SK-N-SH (cell line): ENCODE measurements at regions of chr20 and their contacts with region 1.

Region 1: DNA sequence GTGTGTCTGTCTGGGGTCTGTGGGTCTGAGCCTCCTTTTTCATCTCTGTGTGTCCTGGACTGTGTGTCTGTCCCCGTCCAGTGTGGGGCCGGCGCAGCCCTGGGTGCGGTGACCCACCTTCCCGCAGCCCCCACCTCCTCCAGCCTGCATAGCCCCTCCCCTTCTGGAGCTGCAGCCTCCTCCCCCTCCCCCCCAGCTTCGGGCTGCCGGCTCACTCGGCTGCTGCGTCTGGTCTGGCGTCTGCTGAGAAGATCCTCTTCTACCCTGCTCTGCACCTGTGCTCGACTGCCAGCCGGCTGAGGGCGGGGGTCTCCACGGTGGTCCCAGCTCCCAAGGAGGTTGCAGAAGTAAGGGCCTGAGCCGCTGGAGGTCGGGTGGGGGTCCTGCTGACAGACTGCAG is 7.6 kb upstream of the LKAAEAR1 start:
- DNase-seq: peak; percentile 79
- H3K4me3 ChIP-seq: no peak overlapping the region
- H3K27ac ChIP-seq: 0 out of 4 replicates have a peak overlapping the region, but pooled peaks of 1 of the 2 experiments have one; percentile 8
- H3K4me1 ChIP-seq: peaks cover 0 to 28% of the 10 kb centered on the region in 2 experiments; a peak in 1 of 4 replicates
- H3K27me3 ChIP-seq: no peaks in the 10 kb centered on the region
- CTCF ChIP-seq: no peak
- EP300 ChIP-seq: no peak
- RAD21 ChIP-seq: no peak

Region 2: DNA sequence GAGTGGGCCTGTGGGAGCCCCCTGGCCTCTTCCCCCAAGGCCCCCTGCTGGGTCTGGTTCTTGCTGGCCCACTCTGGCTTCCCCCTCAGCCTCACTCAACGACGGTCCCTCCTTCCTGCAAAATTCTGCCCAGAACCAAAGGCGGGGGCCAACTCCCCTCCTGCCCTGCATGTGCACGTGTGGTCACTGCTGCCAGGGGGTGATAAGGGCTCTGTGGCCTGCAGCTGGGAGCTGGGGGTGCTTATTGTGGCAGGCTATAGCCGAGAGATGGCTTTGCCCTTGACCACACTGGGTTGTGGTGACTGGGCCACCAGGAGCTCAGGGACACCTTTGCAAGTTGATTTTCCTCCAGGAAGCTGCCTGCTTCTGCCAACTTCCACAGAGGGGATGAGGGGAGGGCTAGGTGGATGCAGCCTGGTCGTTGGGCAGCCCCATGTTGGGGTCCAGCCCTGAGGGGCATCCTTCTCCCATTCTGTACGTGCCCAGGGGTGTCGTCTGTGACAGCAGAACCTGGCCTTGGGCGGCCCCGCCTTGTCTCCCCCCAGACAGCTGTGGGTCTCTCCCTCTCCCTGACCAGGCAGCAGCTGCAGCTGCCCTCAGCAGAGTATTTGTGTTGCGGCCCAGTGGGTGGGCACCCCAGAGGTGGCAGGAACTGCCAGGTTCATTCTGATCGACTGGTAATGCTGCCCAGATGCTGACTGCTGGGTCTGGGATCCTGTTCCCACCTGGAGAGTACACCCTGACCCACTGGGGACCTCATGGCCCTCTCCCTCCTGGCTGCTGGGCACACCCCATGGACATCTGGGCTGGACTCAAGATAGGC is 23.2 kb before region 1 on chr20:
- CTCF ChIA-PET with region 1: no interaction called
- POLR2A ChIA-PET with region 1: no interaction called
- DNase-seq: no peak
- H3K4me3 ChIP-seq: no peak overlapping the region
- H3K27ac ChIP-seq: no peak overlapping the region
- H3K4me1 ChIP-seq: peaks cover 9 to 14% of the 10 kb centered on the region in 2 experiments; a peak in 2 of 4 replicates
- H3K27me3 ChIP-seq: no peaks in the 10 kb centered on the region
- CTCF ChIP-seq: no peak
- EP300 ChIP-seq: no peak
- RAD21 ChIP-seq: no peak

Region 3: GRCh38 chr20:64101731-64102621 is 10.2 kb after region 1 on chr20:
- CTCF ChIA-PET with region 1: interaction called, 11 read pairs
- POLR2A ChIA-PET with region 1: no interaction called
- DNase-seq: peak; percentile 94
- H3K4me3 ChIP-seq: peak overlapping the region; percentile 27 to 46
- H3K27ac ChIP-seq: no peak overlapping the region
- H3K4me1 ChIP-seq: peaks cover 0 to 2% of the 10 kb centered on the region in 2 experiments; a peak in 1 of 4 replicates
- H3K27me3 ChIP-seq: no peaks in the 10 kb centered on the region; the same call in 1 of the 2 replicates
- CTCF ChIP-seq: peak; percentile 61
- EP300 ChIP-seq: no peak
- RAD21 ChIP-seq: peak; percentile 51